Activated T-helper 1 cell treated with anti-CD3 and anti-CD28 coated beads, Interleukin-12 subunit alpha, Interleukin-12 subunit beta, Interleukin-2, Interleukin-4 antibody, amounts not matched to agents 30 ng/mL and 10 ng/mL and 1 ng/mL, durations not matched to agents 14 hours and 24 hours and 36 hours (primary cell): ENCODE measurements at regions of chrX and their contacts with region 1.

Region 1: DNA sequence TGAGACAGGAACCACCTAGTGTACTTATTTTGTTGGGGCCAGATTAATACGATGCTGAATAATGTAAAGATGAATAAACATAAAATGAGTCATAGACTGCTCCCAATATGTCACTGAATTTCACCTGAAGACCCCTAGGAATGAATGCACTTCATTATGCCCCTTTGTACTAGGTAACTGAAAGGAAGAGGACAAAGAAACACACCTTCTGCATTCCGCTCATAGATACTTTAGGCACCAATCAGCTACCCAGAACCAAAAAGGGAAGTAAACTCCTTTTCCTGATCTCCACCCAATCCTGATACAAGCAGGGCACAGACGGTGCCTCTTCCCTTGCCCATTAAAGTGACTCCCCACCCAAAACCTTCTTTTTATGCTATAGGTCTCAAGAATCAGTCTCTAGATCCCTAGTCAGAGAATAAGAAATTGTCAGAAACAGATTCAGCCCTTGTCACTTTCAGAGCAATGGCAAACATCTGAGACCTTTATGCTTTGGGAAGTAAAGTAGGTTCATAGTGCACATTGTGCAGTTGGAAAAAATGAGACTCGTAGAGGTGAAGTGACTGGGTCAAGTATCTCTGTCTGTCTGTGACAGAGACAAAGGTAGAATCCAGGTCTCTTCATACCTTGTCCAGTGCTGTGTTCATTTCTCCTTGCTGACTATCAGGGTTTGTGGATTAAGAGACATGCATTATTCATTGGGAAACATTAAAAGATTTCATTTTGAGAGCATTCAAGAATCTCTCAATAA is 2.3 kb downstream of the GPR174 start:
- DNase-seq: no peak
- H3K4me3 Mint-ChIP-seq: peak overlapping the region; percentile 99
- H3K27ac Mint-ChIP-seq: peak overlapping the region; percentile 94
- H3K4me1 Mint-ChIP-seq: peaks cover 53% of the 10 kb centered on the region
- H3K27me3 Mint-ChIP-seq: no peaks in the 10 kb centered on the region

Region 2: GRCh38 chrX:77899081-77899828 is 1247.6 kb before region 1 on chrX and contains the start of gene COX7B:
- intact Hi-C with region 1: loop called (anchors 10 kb)
- DNase-seq: peak; percentile 65
- H3K4me3 Mint-ChIP-seq: peak within 1 kb of the TSS; percentile 95
- H3K27ac Mint-ChIP-seq: peak within 1 kb of the TSS; percentile 94
- H3K4me1 Mint-ChIP-seq: peaks cover 14% of the 10 kb centered on the region
- H3K27me3 Mint-ChIP-seq: peaks cover 2% of the 10 kb centered on the region
- total RNA-seq, gene COX7B: 272 and 286 TPM in 2 replicates

Region 3: GRCh38 chrX:78375894-78376293 is 770.9 kb before region 1 on chrX:
- intact Hi-C with region 1: loop called (anchors 10 kb)
- DNase-seq: no peak
- H3K4me3 Mint-ChIP-seq: no peak overlapping the region
- H3K27ac Mint-ChIP-seq: peak overlapping the region; percentile 27
- H3K4me1 Mint-ChIP-seq: peaks cover 46% of the 10 kb centered on the region
- H3K27me3 Mint-ChIP-seq: no peaks in the 10 kb centered on the region

Region 4: DNA sequence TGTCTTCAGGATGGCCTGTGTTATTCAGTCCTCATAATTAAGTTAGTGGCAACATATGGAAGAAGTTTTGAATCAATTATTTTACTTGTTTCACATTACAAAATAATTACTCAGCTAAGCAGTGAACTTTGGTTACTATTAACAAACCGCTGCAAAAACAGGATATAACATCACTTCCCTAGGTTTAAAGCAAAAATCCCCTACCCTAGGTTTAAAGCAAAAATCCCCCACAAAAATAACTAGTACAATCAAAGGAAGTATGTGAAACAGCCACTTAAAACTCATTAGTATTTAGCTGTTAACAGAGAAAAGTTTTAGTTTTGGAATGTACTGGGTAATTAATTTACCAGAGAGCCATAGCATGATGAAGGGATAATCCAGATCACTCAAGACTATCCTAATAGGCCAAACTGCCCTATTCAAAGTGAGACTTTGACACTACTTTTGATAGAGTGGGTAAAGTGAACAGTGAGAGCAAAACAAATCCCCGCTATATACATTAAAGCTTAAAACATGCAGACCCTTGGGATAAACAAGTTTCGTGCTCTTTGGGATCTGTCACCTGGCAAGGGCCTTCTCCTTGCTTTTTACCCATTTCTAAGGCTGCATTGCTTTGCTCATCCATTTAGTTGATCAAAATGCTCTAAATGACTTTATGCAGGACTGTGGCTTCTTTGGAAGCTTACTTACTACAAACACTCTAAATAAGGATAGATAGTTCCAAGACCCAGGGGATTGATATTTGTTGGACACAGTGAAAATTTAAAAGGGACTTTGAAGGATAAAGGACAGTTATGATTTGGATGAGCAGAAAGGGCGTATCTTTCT is 38.7 kb before region 1 on chrX:
- intact Hi-C with region 1: loop called (anchors 1 kb)
- DNase-seq: no peak
- H3K4me3 Mint-ChIP-seq: peak overlapping the region; percentile 45
- H3K27ac Mint-ChIP-seq: peak overlapping the region; percentile 93
- H3K4me1 Mint-ChIP-seq: peaks cover 39% of the 10 kb centered on the region
- H3K27me3 Mint-ChIP-seq: no peaks in the 10 kb centered on the region

Region 5: GRCh38 chrX:79182616-79183015 is 35.8 kb after region 1 on chrX:
- intact Hi-C with region 1: loop called (anchors 1 kb)
- DNase-seq: no peak
- H3K4me3 Mint-ChIP-seq: peak overlapping the region; percentile 72
- H3K27ac Mint-ChIP-seq: peak overlapping the region; percentile 81
- H3K4me1 Mint-ChIP-seq: peaks cover 52% of the 10 kb centered on the region
- H3K27me3 Mint-ChIP-seq: no peaks in the 10 kb centered on the region

Region 6: GRCh38 chrX:79270401-79270800 is 123.6 kb after region 1 on chrX:
- intact Hi-C with region 1: loop called (anchors 1 kb)
- DNase-seq: peak; percentile 44
- H3K4me3 Mint-ChIP-seq: no peak overlapping the region
- H3K27ac Mint-ChIP-seq: no peak overlapping the region
- H3K4me1 Mint-ChIP-seq: peaks cover 33% of the 10 kb centered on the region
- H3K27me3 Mint-ChIP-seq: no peaks in the 10 kb centered on the region